Heart left ventricle (tissue), 16 donors: ENCODE measurements at regions of chr16 and their contacts with region 1.

Region 1: GRCh38 chr16:9090960-9091866 is at the start of gene HAPSTR1:
- DNase-seq: peak; percentile 100
- ATAC-seq: peak; percentile 92 to 99 (median 96)
- H3K4me3 ChIP-seq: peak within 1 kb of the TSS; percentile 75 to 99 (median 94)
- H3K27ac ChIP-seq: peak within 1 kb of the TSS; percentile 95 to 100 (median 99)
- H3K4me1 ChIP-seq: peaks cover 0 to 47% (median 37%) of the 10 kb centered on the region in 12 donors
- H3K27me3 ChIP-seq: no peaks in the 10 kb centered on the region
- CTCF ChIP-seq: no peak
- POLR2A ChIP-seq: peak; percentile 93 to 99
- total RNA-seq, gene HAPSTR1: 48.9 to 78.4 (median 62.5) TPM

Region 2: DNA sequence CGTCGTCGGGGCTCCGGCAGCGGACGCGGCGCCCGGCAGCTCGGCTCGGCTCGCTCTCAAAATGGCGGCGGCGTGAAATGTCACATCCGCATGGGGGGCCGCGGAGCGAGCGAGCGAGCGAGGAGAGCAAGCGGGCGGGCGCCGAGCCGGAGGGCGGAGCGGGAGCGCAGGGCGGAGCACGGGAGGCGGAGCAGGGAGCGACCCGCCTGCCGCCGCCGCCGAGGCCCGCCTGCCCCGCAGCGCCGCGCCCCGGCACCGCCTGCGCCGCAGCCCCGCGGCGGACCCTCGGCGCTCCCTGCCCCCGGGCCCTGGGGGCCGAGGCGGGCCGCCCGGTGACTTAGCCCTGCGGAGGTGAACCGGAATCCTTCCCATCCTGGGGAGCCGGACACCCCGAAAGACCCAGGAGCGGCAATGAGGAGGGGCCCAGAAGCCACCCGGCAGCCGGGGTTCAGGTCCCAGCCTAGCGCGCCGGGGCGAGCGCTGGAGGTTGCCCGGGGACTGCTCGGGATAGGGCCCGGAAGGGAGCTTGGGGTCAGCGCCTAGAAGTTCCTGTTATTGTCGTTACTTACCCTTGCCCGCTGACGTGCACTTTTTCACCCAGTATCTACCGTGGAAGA is 127.3 kb before region 1 on chr16 and contains the start of gene USP7:
- intact Hi-C with region 1: loop called in 3 of 10 experiments (anchors 5 to 10 kb)
- DNase-seq: peak; percentile 94 to 97 (median 95)
- ATAC-seq: peak; percentile 85 to 97 (median 96)
- H3K4me3 ChIP-seq: peak within 1 kb of the TSS; percentile 63 to 95 (median 80)
- H3K27ac ChIP-seq: peak within 1 kb of the TSS; percentile 33 to 93 (median 82)
- H3K4me1 ChIP-seq: peaks cover 0 to 49% (median 37%) of the 10 kb centered on the region in 12 donors
- H3K27me3 ChIP-seq: no peaks in the 10 kb centered on the region
- CTCF ChIP-seq: no peak
- POLR2A ChIP-seq: no peak
- total RNA-seq, gene USP7: 49.5 to 86.5 (median 68.1) TPM

Region 3: DNA sequence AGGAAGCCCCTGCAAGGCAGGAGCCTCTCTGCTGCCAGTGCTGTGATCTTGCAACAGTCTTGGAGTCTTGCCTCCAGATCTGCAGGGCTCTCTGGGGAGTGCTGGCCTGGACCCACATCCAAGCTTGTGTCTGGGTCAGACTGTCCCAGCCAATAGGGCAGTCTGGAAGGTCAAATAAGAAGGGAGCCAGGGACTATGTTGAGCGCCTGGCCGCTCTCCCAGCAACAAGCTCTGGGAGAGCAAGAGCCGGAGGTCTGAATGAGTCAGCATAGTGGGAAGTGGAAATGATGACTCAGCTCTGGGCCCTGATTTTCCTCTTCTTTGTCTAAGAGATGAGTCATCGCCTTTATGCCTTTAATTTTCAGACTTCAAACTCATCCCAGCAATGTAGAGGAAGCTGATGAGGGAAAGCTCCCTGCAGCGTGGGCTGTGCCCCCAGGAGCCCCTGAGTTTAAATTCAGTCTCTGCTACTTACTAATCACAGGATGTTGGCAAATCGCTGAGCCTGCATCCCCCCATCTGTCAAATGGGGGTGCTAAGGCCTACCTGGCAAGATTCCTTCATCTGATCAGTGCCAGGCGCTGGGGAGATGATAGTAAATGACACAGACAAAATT is 43.4 kb before region 1 on chr16:
- intact Hi-C with region 1: loop called in 3 of 10 experiments (anchors 1 to 5 kb)
- DNase-seq: peak; percentile 85 to 95 (median 90)
- ATAC-seq: peak; percentile 98 to 99 (median 99)
- H3K4me3 ChIP-seq: no peak overlapping the region
- H3K27ac ChIP-seq: peak overlapping the region; percentile 31 to 85 (median 80)
- H3K4me1 ChIP-seq: peaks cover 0 to 16% (median 12%) of the 10 kb centered on the region in 12 donors
- H3K27me3 ChIP-seq: no peaks in the 10 kb centered on the region
- CTCF ChIP-seq: no peak
- POLR2A ChIP-seq: no peak

Region 4: GRCh38 chr16:9124908-9125584 is 33.8 kb after region 1 on chr16:
- intact Hi-C with region 1: loop called in 1 of 10 experiments (anchors 5 kb)
- DNase-seq: peak in 1 of 5 donors; percentile 18
- ATAC-seq: no peak
- H3K4me3 ChIP-seq: no peak overlapping the region
- H3K27ac ChIP-seq: no peak overlapping the region
- H3K4me1 ChIP-seq: peaks cover 0 to 68% (median 40%) of the 10 kb centered on the region in 12 donors
- H3K27me3 ChIP-seq: no peaks in the 10 kb centered on the region
- CTCF ChIP-seq: no peak
- POLR2A ChIP-seq: no peak

Region 5: GRCh38 chr16:9134739-9135138 is 43.5 kb after region 1 on chr16:
- intact Hi-C with region 1: loop called in 2 of 10 experiments (anchors 5 kb)
- DNase-seq: peak; percentile 26 to 75 (median 50)
- ATAC-seq: peak in 3 of 4 donors; percentile 63 to 72 (median 70)
- H3K4me3 ChIP-seq: no peak overlapping the region
- H3K27ac ChIP-seq: no peak overlapping the region
- H3K4me1 ChIP-seq: peaks cover 0 to 21% (median 6%) of the 10 kb centered on the region in 12 donors
- H3K27me3 ChIP-seq: no peaks in the 10 kb centered on the region
- CTCF ChIP-seq: peak; percentile 12 to 60 (median 47)
- POLR2A ChIP-seq: no peak